ENCODE measurements at regions of chr17 and their contacts with region 1.

Region 1: GRCh38 chr17:4366327-4367063 is at the start of gene UBE2G1:
- DNase-seq: peak; percentile 97 to 98 (median 98)
- H3K4me3 ChIP-seq: peak within 1 kb of the TSS; percentile 51 to 96 (median 94)
- H3K4me3 Mint-ChIP-seq: peak within 1 kb of the TSS; percentile 73 to 94
- H3K27ac ChIP-seq: peak within 1 kb of the TSS; percentile 48 to 83
- H3K27ac Mint-ChIP-seq: peak within 1 kb of the TSS; percentile 91 to 96 (median 94)
- H3K4me1 ChIP-seq: peaks cover 17 to 23% of the 10 kb centered on the region in 2 donors
- H3K4me1 Mint-ChIP-seq: peaks cover 24% of the 10 kb centered on the region
- H3K27me3 ChIP-seq: no peaks in the 10 kb centered on the region
- H3K27me3 Mint-ChIP-seq: peaks cover under 1 to 5% (median 4%) of the 10 kb centered on the region in 3 donors
- CTCF ChIP-seq: peak; percentile 13
- polyA plus RNA-seq, gene UBE2G1: 18.3 to 41.4 (median 29.3) TPM

Region 2: GRCh38 chr17:4263282-4264215 is 102.9 kb before region 1 on chr17 and contains the start of gene ANKFY1:
- intact Hi-C with region 1: loop called (anchors 5 kb)
- DNase-seq: peak; percentile 90 to 91 (median 91)
- H3K4me3 ChIP-seq: peak within 1 kb of the TSS; percentile 90 to 95 (median 92)
- H3K4me3 Mint-ChIP-seq: peak within 1 kb of the TSS; percentile 88 to 94
- H3K27ac ChIP-seq: peak within 1 kb of the TSS; percentile 71 to 89
- H3K27ac Mint-ChIP-seq: peak within 1 kb of the TSS; percentile 73 to 90 (median 83)
- H3K4me1 ChIP-seq: peaks cover 16 to 27% of the 10 kb centered on the region in 2 donors
- H3K4me1 Mint-ChIP-seq: peaks cover 29% of the 10 kb centered on the region
- H3K27me3 ChIP-seq: no peaks in the 10 kb centered on the region
- H3K27me3 Mint-ChIP-seq: peaks cover 0 to 7% (median 4%) of the 10 kb centered on the region in 3 donors
- CTCF ChIP-seq: no peak
- polyA plus RNA-seq, gene ANKFY1: 13.5 to 46.1 (median 21.7) TPM

Region 3: DNA sequence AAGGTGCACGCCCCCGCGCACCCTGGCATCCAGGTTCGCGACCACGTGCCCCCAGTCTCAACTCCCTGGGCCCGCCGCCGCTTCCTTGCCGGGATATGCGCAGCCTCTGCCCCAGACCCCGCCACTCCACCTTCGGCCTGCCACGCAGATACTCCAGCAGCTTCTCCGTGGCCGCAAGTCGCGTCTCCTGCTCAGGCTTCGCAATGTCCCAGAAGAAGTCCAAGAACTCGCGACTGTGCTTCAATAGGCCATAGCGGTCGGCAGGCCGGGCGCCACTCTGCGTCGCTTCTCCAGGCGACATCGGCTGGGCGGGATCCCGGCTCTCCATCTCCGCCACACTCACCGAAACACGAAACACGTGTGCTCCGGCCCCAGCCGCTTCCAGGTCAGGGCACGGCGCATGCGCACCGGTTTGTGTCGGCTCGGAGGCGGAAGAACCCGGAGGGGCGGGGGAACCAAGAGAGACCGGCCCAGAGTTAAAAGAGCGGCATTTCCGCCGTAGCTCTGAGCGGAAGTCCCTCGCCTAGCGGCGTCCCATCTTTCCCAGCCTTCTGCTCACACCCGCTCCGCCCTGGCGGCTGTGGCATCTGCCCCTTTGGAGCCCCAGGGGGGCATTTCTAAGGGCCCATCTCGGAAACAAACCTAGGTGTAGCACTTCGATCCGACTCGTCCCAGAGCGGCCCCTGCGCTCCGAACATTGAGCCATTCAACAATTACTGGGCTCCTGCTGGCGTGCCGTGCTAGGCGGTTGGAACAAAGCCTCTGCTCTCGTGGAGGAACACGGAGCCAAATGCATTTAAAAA is 188.7 kb after region 1 on chr17 and contains the start of gene MYBBP1A:
- intact Hi-C with region 1: loop called in 1 of 2 experiments (anchors 5 kb)
- DNase-seq: peak; percentile 94 to 96 (median 95)
- H3K4me3 ChIP-seq: peak within 1 kb of the TSS; percentile 70 to 89 (median 87)
- H3K4me3 Mint-ChIP-seq: peak within 1 kb of the TSS; percentile 91 to 97
- H3K27ac ChIP-seq: peak within 1 kb of the TSS; percentile 62 to 80
- H3K27ac Mint-ChIP-seq: peak within 1 kb of the TSS; percentile 86 to 96 (median 95)
- H3K4me1 ChIP-seq: peaks cover 19 to 26% of the 10 kb centered on the region in 2 donors
- H3K4me1 Mint-ChIP-seq: peaks cover 21% of the 10 kb centered on the region
- H3K27me3 ChIP-seq: no peaks in the 10 kb centered on the region
- H3K27me3 Mint-ChIP-seq: peaks cover 0 to 2% (median 1%) of the 10 kb centered on the region in 3 donors
- CTCF ChIP-seq: peak; percentile 14
- polyA plus RNA-seq, gene MYBBP1A: 4.2 to 22.3 (median 5.3) TPM